PC-3 (cell line): ENCODE measurements at regions of chr7 and their contacts with region 1.

Region 1: GRCh38 chr7:19747740-19748339 is 25.6 kb downstream of the TMEM196 start:
- DNase-seq: peak; percentile 81
- ATAC-seq: peak; percentile 78
- H3K4me3 ChIP-seq: no peak overlapping the region
- H3K27ac ChIP-seq: no peak overlapping the region
- H3K4me1 ChIP-seq: peaks cover 8% of the 10 kb centered on the region; the same call in 1 of the 2 replicates
- H3K27me3 ChIP-seq: no peaks in the 10 kb centered on the region
- CTCF ChIP-seq: peak; percentile 75

Region 2: DNA sequence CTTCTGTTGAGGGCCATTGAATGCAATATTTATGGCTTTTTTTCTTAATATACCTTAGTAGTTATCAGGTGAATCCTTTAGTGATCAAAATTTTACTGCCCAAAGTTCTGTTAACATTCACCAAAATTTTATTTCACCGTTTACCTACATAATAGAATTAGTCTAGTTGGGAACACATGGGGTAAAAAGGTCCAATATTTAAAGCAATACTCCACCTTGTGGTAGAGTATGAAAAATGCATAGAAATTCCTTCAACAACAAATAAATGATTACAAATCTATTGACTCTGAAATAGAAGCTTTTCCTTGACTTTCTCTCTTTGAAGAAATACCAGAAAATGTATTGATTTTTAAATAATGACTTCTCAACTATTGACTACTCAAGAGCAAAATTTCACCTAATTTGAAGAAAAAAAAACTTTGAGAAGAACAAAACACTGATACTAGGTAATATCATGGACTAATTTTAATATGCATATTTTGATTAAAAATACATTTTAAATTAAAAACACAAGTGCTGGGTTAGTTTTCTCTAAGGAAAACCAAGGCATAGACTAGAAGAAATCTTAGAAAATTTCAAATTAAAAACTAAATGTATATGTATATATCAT is 82.3 kb before region 1 on chr7:
- CTCF ChIA-PET with region 1: interaction called, 15 read pairs
- POLR2A ChIA-PET with region 1: no interaction called
- intact Hi-C with region 1: no loop called
- DNase-seq: peak; percentile 50
- ATAC-seq: peak; percentile 51; the same call in 1 of the 2 replicates
- H3K4me3 ChIP-seq: no peak overlapping the region
- H3K27ac ChIP-seq: no peak overlapping the region
- H3K4me1 ChIP-seq: peaks cover 12% of the 10 kb centered on the region
- H3K27me3 ChIP-seq: peaks cover 7% of the 10 kb centered on the region; the same call in 1 of the 2 replicates
- CTCF ChIP-seq: peak; percentile 77

Region 3: GRCh38 chr7:19713676-19714075 is 34.2 kb before region 1 on chr7:
- CTCF ChIA-PET with region 1: interaction called, 10 read pairs
- POLR2A ChIA-PET with region 1: no interaction called
- intact Hi-C with region 1: loop called (anchors 2 kb)
- DNase-seq: peak; percentile 82
- ATAC-seq: 0 out of 2 replicates have a peak, but pooled peaks have one; percentile 31
- H3K4me3 ChIP-seq: no peak overlapping the region
- H3K27ac ChIP-seq: no peak overlapping the region
- H3K4me1 ChIP-seq: peaks cover 5% of the 10 kb centered on the region; the same call in 1 of the 2 replicates
- H3K27me3 ChIP-seq: no peaks in the 10 kb centered on the region
- CTCF ChIP-seq: peak; percentile 78

Region 4: DNA sequence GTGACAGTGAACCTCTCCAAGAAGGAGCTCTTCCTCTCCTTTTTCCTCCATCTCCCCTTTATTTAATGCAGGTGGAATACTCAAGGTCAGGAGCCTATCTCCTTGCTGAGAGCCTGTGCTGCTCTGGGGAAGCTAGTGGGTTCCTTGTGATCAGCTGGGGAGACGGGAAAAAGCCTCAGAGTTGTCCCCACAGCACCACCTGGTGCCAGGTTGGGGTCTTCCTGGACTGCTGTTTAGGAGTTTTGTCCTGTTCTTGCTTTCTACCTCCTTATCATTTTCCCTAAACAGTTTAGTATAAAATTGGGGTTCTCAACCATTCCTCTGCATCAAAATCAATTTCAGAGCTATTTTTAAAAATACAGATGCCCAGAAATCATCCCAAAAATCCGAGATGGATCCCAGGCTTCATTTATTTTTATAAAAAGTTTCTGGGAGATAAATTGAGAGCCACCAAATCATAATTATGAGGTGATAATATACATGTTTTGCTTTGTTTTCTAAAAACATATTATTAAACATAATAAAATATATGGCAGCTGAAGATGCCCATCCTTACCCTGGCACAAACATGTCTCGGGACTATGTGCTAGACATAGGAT is 425.0 kb after region 1 on chr7:
- CTCF ChIA-PET with region 1: interaction called, 17 read pairs
- POLR2A ChIA-PET with region 1: no interaction called
- intact Hi-C with region 1: loop called (anchors 1 kb)
- DNase-seq: peak; percentile 74
- ATAC-seq: peak; percentile 99
- H3K4me3 ChIP-seq: no peak overlapping the region
- H3K27ac ChIP-seq: no peak overlapping the region
- H3K4me1 ChIP-seq: no peaks in the 10 kb centered on the region
- H3K27me3 ChIP-seq: no peaks in the 10 kb centered on the region
- CTCF ChIP-seq: peak; percentile 77

Region 5: DNA sequence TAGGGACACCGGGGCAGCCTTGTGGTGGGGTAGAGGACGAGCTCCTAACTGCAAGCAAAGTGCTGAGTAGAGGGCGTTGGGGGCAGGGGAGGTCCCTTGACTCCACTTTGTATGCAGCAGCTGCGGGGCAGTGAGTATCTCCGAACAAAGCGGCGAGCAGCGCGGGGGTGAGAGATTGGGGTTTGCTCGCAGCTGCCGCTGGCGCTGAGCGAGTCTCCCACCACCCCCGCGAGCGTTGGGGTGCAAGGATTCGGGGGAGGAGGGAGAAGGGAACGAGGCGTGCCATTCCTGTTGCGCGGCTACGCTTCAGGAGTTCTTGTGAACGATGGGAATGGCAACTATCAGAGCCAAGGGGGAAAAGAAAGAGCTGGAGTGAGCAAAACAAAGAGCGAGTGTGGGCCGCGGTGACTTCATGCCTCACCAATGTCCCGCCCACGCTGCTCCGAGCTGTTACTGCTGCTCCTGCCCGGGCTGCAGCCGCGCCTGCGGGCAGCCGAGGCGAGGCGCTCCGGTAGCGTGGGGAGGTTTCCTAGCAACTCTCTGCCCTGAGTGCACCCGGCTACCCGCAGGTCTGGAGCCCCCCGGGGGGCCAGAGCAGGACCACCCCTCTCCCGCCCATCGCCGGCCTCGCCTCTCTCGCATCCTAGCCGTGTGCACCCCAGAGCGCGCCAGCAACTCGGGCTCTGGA is 582.5 kb after region 1 on chr7 and contains the start of gene ITGB8:
- CTCF ChIA-PET with region 1: interaction called, 15 read pairs
- POLR2A ChIA-PET with region 1: no interaction called
- intact Hi-C with region 1: loop called (anchors 5 kb)
- DNase-seq: peak; percentile 79
- ATAC-seq: peak; percentile 67
- H3K4me3 ChIP-seq: peak within 1 kb of the TSS; percentile 89
- H3K27ac ChIP-seq: peak within 1 kb of the TSS; percentile 85
- H3K4me1 ChIP-seq: peaks cover 26% of the 10 kb centered on the region
- H3K27me3 ChIP-seq: no peaks in the 10 kb centered on the region
- CTCF ChIP-seq: no peak
- total RNA-seq, gene ITGB8: 13.9 and 14.0 TPM in 2 replicates

Region 6: DNA sequence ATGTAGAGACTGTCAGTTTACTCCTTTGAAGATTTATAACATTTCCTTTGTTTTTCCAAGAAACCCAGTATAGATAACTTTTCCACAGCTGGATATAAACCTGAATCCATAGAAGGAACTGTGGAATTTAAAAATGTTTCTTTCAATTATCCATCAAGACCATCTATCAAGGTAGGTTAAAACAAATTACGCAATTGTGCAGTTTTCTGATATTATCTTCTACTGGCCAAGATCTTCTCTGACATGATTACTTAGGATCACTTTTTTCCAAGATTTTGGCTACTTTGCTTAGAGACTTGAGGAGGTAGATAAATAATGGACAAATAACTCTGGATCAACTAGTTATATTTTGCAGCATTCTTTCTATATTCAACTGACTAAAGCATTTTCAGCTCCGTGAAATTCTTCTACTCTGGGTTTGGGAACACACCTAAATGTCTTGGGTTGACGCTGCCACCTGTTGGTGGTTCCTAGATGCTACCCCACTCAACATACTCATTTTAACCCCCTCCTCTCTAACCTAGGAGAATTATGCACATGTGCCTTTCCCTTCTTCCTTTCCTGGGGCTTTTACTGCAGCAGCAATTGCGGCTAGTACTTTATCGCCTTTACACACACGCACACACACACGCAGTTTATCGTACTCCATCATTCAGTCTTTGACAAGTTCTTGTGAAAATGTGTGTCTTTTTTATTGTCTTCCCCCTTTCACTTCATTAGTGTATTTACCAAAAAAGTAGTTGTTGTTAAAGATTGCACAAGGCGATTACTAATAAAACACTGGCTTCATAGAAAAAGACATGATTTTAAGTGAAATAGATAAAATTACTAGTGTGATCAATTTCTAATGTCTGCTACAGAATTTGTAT is 900.3 kb after region 1 on chr7:
- CTCF ChIA-PET with region 1: interaction called, 11 read pairs
- POLR2A ChIA-PET with region 1: no interaction called
- intact Hi-C with region 1: loop called (anchors 2 kb)
- DNase-seq: peak; percentile 70
- ATAC-seq: peak; percentile 95
- H3K4me3 ChIP-seq: no peak overlapping the region
- H3K27ac ChIP-seq: no peak overlapping the region
- H3K4me1 ChIP-seq: no peaks in the 10 kb centered on the region
- H3K27me3 ChIP-seq: peaks cover 10% of the 10 kb centered on the region
- CTCF ChIP-seq: peak; percentile 81